BJ (cell line): ENCODE measurements at regions of chr1 and their contacts with region 1.

Region 1: DNA sequence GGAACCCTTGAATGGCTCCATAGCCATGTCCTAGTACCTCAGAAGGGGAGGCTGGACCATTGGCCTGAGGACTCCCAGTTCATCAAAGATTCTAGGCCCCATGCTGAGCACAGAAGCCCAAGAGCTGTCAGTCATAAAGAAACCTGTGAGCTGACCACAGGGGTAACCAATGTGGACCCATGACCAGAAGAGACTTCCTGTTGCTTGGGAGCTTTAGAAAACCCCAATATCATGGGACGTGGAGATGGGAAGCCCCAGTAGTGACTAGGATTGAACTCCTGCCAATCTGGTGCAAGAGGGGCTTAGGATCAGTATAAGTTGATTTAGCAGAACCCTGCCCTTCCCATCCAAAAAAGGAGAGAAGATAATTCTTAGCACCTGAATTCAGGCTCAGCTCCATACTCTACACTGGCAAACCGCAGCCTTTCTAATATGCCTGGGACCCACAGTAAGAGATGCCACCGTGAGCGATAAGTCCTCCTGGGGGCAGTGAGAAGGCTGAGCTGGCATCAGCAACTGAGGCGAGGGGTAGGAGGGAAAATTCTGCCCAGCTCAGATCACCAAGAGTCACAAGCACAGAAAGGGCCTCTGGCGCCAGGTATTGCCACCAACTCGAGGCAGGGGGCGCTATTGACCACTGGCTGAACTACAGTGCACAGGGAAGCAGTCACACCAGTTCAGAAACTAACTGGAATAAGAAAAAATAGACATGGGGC is 108.9 kb downstream of the CAPN8 start:
- DNase-seq: no peak
- H3K4me3 ChIP-seq: no peak overlapping the region
- H3K27me3 ChIP-seq: no peaks in the 10 kb centered on the region
- CTCF ChIP-seq: peak; percentile 46; the same call in 1 of the 2 replicates

Region 2: DNA sequence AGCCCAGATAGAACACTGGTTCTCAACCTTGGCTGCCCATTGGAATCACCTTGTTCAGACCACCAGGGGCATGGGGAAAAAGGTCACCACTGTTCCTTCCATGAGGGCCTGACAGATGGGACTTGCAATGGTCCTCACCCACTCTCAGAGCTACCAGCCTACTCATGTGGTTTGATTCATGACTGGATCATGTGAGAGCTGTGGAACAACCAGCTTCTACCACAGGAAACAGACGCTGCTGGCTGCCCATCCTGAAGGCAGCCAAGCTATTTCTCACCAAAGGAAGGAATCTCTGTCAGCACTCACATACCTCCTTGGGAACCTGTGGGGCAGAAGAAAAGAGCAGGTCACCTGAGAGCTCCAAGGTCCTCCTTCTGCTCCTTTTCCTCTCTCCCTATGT is 55.4 kb after region 1 on chr1:
- CTCF ChIA-PET with region 1: interaction called, 21 read pairs
- POLR2A ChIA-PET with region 1: no interaction called
- DNase-seq: no peak
- H3K4me3 ChIP-seq: no peak overlapping the region
- H3K27me3 ChIP-seq: no peaks in the 10 kb centered on the region
- CTCF ChIP-seq: no peak